ENCODE measurements at regions of chr3 and their contacts with region 1.

Region 1: GRCh38 chr3:149657926-149658733 is at the start of gene WWTR1:
- DNase-seq: peak; percentile 97
- ATAC-seq: peak; percentile 92
- total RNA-seq, gene WWTR1: 143 TPM

Region 2: GRCh38 chr3:149534671-149535332 is 123.3 kb before region 1 on chr3:
- intact Hi-C with region 1: loop called (anchors 5 kb)
- DNase-seq: no peak
- ATAC-seq: peak; percentile 38

Region 3: GRCh38 chr3:150503402-150504099 is 845.4 kb after region 1 on chr3:
- intact Hi-C with region 1: no loop called
- DNase-seq: no peak
- ATAC-seq: peak; percentile 20

Measured in sciatic nerve (tissue), 2 donors.